Heart right ventricle (tissue), 16 donors: ENCODE measurements at regions of chr14 and their contacts with region 1.

Region 1: GRCh38 chr14:49633640-49634546 is 1.2 kb downstream of the DNAAF2 start:
- DNase-seq: peak; percentile 93 to 94
- ATAC-seq: peak; percentile 93 to 97 (median 95)
- H3K4me3 ChIP-seq: peak overlapping the region; percentile 69 to 98 (median 88)
- H3K27ac ChIP-seq: peak overlapping the region; percentile 84 to 99 (median 96)
- H3K4me1 ChIP-seq: peaks cover 8 to 61% (median 43%) of the 10 kb centered on the region in 9 donors
- H3K27me3 ChIP-seq: no peaks in the 10 kb centered on the region
- CTCF ChIP-seq: peak; percentile 67 to 95 (median 87)

Region 2: GRCh38 chr14:49692811-49693734 is 59.2 kb after region 1 on chr14 and contains the start of gene KLHDC1:
- intact Hi-C with region 1: loop called in 9 of 10 experiments (anchors 5 to 10 kb)
- DNase-seq: peak; percentile 90 to 93
- ATAC-seq: peak; percentile 91 to 96 (median 94)
- H3K4me3 ChIP-seq: peak within 1 kb of the TSS; percentile 36 to 88 (median 72)
- H3K27ac ChIP-seq: peak within 1 kb of the TSS; percentile 85 to 99 (median 95)
- H3K4me1 ChIP-seq: peaks cover 6 to 33% (median 17%) of the 10 kb centered on the region in 9 donors
- H3K27me3 ChIP-seq: no peaks in the 10 kb centered on the region
- CTCF ChIP-seq: no peak
- total RNA-seq, gene KLHDC1: 5.0 to 8.1 (median 7.4) TPM

Region 3: GRCh38 chr14:49767562-49768300 is 133.8 kb after region 1 on chr14 and contains the start of gene KLHDC2:
- intact Hi-C with region 1: loop called in 7 of 10 experiments (anchors 2 to 10 kb)
- DNase-seq: peak; percentile 89 to 93
- ATAC-seq: peak; percentile 90 to 97 (median 96)
- H3K4me3 ChIP-seq: peak within 1 kb of the TSS; percentile 73 to 99 (median 97)
- H3K27ac ChIP-seq: peak within 1 kb of the TSS; percentile 89 to 99 (median 98)
- H3K4me1 ChIP-seq: peaks cover 2 to 35% (median 31%) of the 10 kb centered on the region in 9 donors
- H3K27me3 ChIP-seq: no peaks in the 10 kb centered on the region
- CTCF ChIP-seq: peak in 6 of 9 donors; percentile 19 to 67 (median 36)
- total RNA-seq, gene KLHDC2: 68.9 to 106 (median 83.8) TPM

Region 4: GRCh38 chr14:49820176-49820575 is 186.3 kb after region 1 on chr14:
- intact Hi-C with region 1: loop called in 1 of 10 experiments (anchors 10 kb)
- DNase-seq: no peak
- ATAC-seq: no peak
- H3K4me3 ChIP-seq: no peak overlapping the region
- H3K27ac ChIP-seq: no peak overlapping the region
- H3K4me1 ChIP-seq: no peaks in the 10 kb centered on the region
- H3K27me3 ChIP-seq: no peaks in the 10 kb centered on the region
- CTCF ChIP-seq: no peak

Region 5: DNA sequence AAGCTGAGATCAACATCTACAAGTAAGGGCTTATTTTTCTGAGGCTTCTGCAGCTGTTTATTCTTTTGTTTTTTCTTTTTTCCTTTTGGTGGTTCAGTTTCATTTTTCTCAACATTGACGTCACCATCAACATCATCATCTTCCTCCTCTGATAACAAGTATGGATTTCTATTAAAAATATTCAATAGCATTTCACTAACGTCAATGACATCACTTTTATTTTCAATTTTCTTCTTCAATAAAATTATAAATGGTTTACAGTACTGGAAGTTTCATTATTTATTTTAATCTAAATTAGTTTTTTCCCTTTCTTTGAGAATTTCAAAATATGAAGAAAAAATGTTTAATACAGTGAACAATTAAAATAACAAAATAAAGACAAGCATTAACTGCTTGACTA is 194.7 kb after region 1 on chr14:
- intact Hi-C with region 1: loop called in 5 of 10 experiments (anchors 10 kb)
- DNase-seq: no peak
- ATAC-seq: no peak
- H3K4me3 ChIP-seq: no peak overlapping the region
- H3K27ac ChIP-seq: no peak overlapping the region
- H3K4me1 ChIP-seq: no peaks in the 10 kb centered on the region
- H3K27me3 ChIP-seq: no peaks in the 10 kb centered on the region
- CTCF ChIP-seq: no peak

Region 6: GRCh38 chr14:49852301-49853157 is 218.6 kb after region 1 on chr14 and contains the start of gene NEMF:
- intact Hi-C with region 1: loop called in 1 of 10 experiments (anchors 10 kb)
- DNase-seq: peak; percentile 91
- ATAC-seq: peak; percentile 89 to 96 (median 92)
- H3K4me3 ChIP-seq: peak within 1 kb of the TSS; percentile 45 to 93 (median 86)
- H3K27ac ChIP-seq: peak within 1 kb of the TSS; percentile 49 to 97 (median 91)
- H3K4me1 ChIP-seq: peaks cover 0 to 37% (median 31%) of the 10 kb centered on the region in 9 donors
- H3K27me3 ChIP-seq: no peaks in the 10 kb centered on the region
- CTCF ChIP-seq: peak; percentile 26 to 96 (median 82)
- total RNA-seq, gene NEMF: 45.0 to 67.4 (median 55.5) TPM

Region 7: GRCh38 chr14:49867831-49868723 is 234.2 kb after region 1 on chr14:
- intact Hi-C with region 1: loop called in 1 of 10 experiments (anchors 10 kb)
- DNase-seq: peak; percentile 96 to 98
- ATAC-seq: peak; percentile 95 to 98 (median 97)
- H3K4me3 ChIP-seq: peak overlapping the region; percentile 22 to 75 (median 62)
- H3K27ac ChIP-seq: peak overlapping the region; percentile 75 to 97 (median 94)
- H3K4me1 ChIP-seq: peaks cover 0 to 56% (median 21%) of the 10 kb centered on the region in 9 donors
- H3K27me3 ChIP-seq: no peaks in the 10 kb centered on the region
- CTCF ChIP-seq: peak in 1 of 9 donors; percentile 4